Heart right ventricle (tissue), 16 donors: ENCODE measurements at regions of chr17 and their contacts with region 1.

Region 1: GRCh38 chr17:17729620-17730249 is 48.5 kb downstream of the RAI1 start:
- DNase-seq: no peak
- ATAC-seq: peak in 3 of 8 donors; percentile 26 to 37 (median 33)
- H3K4me3 ChIP-seq: no peak overlapping the region
- H3K27ac ChIP-seq: peak overlapping the region in 4 of 10 donors; percentile 34 to 52 (median 47)
- H3K4me1 ChIP-seq: peaks cover 20 to 67% (median 38%) of the 10 kb centered on the region in 9 donors
- H3K27me3 ChIP-seq: peaks cover 0 to under 1% (median 0%) of the 10 kb centered on the region in 7 donors
- CTCF ChIP-seq: peak; percentile 20 to 59 (median 50)

Region 2: DNA sequence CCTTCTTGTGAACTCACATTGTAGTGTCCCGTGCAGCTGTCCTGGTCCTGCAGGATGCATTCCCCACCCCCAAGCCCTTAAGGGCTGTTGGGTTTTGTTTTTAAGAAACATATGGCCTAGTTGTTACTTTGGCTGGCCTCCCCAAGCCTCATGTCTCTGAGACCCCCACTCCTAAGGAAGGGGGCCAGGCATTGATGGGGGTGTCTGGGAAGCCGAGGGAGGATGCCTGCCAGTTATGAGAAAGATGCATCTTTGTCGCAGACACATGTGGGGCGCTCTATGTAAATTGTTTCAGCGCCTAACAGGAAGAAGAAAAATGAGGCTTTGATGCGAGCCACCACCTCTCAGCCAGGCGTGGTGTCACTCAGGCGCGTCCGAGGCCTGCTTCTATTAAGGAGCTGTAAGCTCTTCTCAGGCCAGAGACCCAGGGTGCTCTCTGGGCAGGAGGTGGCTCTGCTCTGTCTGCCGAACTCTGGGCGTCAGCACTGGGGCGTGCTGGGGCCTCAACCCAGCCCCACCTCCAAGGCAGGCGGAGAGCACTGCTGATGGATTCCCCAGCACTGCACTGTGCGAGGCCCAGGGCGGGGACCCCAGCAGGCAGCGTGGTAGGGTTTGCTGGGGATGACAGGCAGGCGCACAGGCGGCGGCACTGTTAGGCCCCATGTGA is 36.5 kb after region 1 on chr17:
- intact Hi-C with region 1: loop called in 1 of 10 experiments (anchors 2 kb)
- DNase-seq: no peak
- ATAC-seq: peak in 1 of 8 donors; percentile 16
- H3K4me3 ChIP-seq: no peak overlapping the region
- H3K27ac ChIP-seq: peak overlapping the region in 2 of 10 donors; percentile 9 to 31
- H3K4me1 ChIP-seq: peaks cover 29 to 77% (median 69%) of the 10 kb centered on the region in 9 donors
- H3K27me3 ChIP-seq: no peaks in the 10 kb centered on the region
- CTCF ChIP-seq: no peak